ENCODE measurements at regions of chr1 and their contacts with region 1.

Region 1: GRCh38 chr1:205485338-205486228 is 18.9 kb upstream of the CDK18 start:
- DNase-seq: peak; percentile 94
- H3K27ac ChIP-seq: no peak overlapping the region
- CTCF ChIP-seq: peak; percentile 97

Region 2: DNA sequence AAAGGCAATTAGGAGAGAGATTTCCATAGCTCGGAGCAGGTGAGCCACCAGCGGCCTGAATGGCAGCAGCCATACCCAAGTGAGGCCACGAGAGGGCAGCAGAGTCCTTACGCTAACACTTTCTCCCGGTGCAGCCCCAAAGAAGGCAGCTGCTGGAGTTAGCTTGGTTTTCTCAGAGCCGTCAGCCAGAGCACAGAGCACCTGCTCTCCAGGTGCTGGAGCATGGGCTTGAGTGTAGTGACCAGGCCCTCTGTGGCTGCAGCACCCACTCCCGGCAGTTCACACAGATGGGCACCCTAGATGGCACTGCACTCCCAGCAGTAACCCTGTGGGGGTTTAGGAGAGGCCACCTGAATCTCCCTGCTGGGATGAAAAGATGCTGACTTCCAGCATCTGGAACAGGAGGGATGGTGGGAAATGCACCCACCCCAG is 212.0 kb before region 1 on chr1:
- CTCF ChIA-PET with region 1: interaction called, 19 read pairs
- POLR2A ChIA-PET with region 1: no interaction called
- DNase-seq: peak; percentile 96
- H3K27ac ChIP-seq: peak overlapping the region; percentile 90
- CTCF ChIP-seq: peak; percentile 97

Region 3: DNA sequence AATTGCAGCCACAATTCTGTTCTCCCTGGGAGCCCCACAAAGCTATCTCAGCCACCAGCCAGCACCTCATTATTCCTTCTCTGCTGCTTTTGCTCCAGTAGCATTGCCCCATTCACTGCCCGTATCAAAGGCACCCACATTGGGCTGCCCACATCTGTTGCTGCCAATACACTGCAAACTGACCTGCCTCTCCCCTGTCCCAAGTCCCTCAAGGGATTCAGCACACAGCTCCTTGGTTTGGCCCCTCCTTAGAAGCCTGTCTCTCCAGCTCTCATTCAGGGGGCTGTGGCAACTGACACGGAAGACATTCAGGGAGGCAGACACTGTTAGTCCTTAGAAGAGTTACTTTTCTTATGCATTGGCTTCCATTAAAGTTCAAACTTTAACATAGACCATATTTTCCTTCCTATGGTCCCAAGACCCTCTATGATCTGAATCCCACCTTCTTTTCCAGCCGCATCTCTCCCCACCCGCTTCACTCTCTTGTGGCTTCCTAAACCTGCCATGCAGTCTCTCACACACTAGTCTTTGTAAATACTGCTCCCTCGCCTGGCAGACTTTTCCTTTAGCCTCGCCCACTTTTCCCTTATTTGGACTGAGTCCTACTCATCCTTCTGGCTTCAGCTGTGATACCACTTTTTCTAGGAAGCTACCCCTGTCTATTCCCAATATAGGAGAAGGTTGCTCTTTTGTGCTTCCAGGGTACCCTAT is 109.6 kb before region 1 on chr1:
- CTCF ChIA-PET with region 1: interaction called, 18 read pairs
- POLR2A ChIA-PET with region 1: no interaction called
- DNase-seq: peak; percentile 81
- H3K27ac ChIP-seq: peak overlapping the region; percentile 90
- CTCF ChIP-seq: no peak

Region 4: GRCh38 chr1:205416322-205416721 is 69.3 kb before region 1 on chr1:
- CTCF ChIA-PET with region 1: interaction called, 28 read pairs
- POLR2A ChIA-PET with region 1: no interaction called
- DNase-seq: no peak
- H3K27ac ChIP-seq: no peak overlapping the region
- CTCF ChIP-seq: no peak

Region 5: GRCh38 chr1:205440476-205441317 is 44.9 kb before region 1 on chr1:
- CTCF ChIA-PET with region 1: interaction called, 40 read pairs
- POLR2A ChIA-PET with region 1: no interaction called
- DNase-seq: peak; percentile 95
- H3K27ac ChIP-seq: peak overlapping the region; percentile 85
- CTCF ChIP-seq: no peak

Region 6: DNA sequence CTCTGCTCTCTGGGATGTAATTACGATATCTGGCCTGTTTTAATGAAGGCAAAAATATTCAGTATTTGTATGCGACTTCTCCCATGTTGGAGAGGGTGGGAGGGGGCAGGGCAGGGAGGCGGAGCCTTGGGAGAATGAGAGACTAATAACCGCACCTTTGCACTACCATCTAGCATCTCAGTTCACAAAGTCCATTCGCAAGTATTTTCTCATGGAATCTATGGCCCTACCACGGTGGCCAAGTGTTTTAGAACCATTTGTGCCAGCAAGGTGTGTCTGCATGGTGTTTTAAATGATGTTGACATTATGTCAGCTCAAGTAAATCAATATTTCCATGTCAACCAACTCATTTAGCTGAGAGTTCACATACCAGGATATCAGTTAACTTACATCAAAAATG is 15.5 kb before region 1 on chr1:
- CTCF ChIA-PET with region 1: interaction called, 14 read pairs
- POLR2A ChIA-PET with region 1: no interaction called
- DNase-seq: no peak
- H3K27ac ChIP-seq: no peak overlapping the region
- CTCF ChIP-seq: no peak

Region 7: GRCh38 chr1:205528887-205529825 is 43.6 kb after region 1 on chr1:
- CTCF ChIA-PET with region 1: interaction called, 326 read pairs
- POLR2A ChIA-PET with region 1: no interaction called
- DNase-seq: peak; percentile 89
- H3K27ac ChIP-seq: no peak overlapping the region
- CTCF ChIP-seq: peak; percentile 93